Spleen (tissue), 13 donors: ENCODE measurements at regions of chr12 and their contacts with region 1.

Region 1: GRCh38 chr12:104381731-104382480 is 74.8 kb upstream of the CHST11 start:
- DNase-seq: peak; percentile 93
- H3K4me3 ChIP-seq: no peak overlapping the region
- H3K27ac ChIP-seq: no peak overlapping the region
- H3K4me1 ChIP-seq: peaks cover 0 to 11% (median 8%) of the 10 kb centered on the region in 6 donors
- H3K27me3 ChIP-seq: peaks cover 0 to 6% (median 0%) of the 10 kb centered on the region in 7 donors
- CTCF ChIP-seq: peak; percentile 69 to 96 (median 89)
- POLR2A ChIP-seq: no peak

Region 2: GRCh38 chr12:104234926-104235499 is 146.9 kb before region 1 on chr12:
- intact Hi-C with region 1: no loop called
- DNase-seq: no peak
- H3K4me3 ChIP-seq: no peak overlapping the region
- H3K27ac ChIP-seq: no peak overlapping the region
- H3K4me1 ChIP-seq: no peaks in the 10 kb centered on the region
- H3K27me3 ChIP-seq: no peaks in the 10 kb centered on the region
- CTCF ChIP-seq: no peak
- POLR2A ChIP-seq: no peak

Region 3: GRCh38 chr12:104303538-104304151 is 78.3 kb before region 1 on chr12 and contains the start of gene EID3:
- intact Hi-C with region 1: no loop called
- DNase-seq: peak; percentile 98
- H3K4me3 ChIP-seq: peak within 1 kb of the TSS; percentile 38 to 75 (median 50)
- H3K27ac ChIP-seq: peak within 1 kb of the TSS; percentile 58 to 89 (median 80)
- H3K4me1 ChIP-seq: peaks cover 15 to 74% (median 50%) of the 10 kb centered on the region in 6 donors
- H3K27me3 ChIP-seq: no peaks in the 10 kb centered on the region
- CTCF ChIP-seq: no peak
- POLR2A ChIP-seq: peak in 1 of 3 donors; percentile 17
- total RNA-seq, gene EID3: 4.4 to 20.8 (median 7.4) TPM

Region 4: GRCh38 chr12:104877123-104877705 is 495.3 kb after region 1 on chr12:
- intact Hi-C with region 1: loop called (anchors 5 kb)
- DNase-seq: no peak
- H3K4me3 ChIP-seq: no peak overlapping the region
- H3K27ac ChIP-seq: no peak overlapping the region
- H3K4me1 ChIP-seq: no peaks in the 10 kb centered on the region
- H3K27me3 ChIP-seq: no peaks in the 10 kb centered on the region
- CTCF ChIP-seq: peak in 9 of 11 experiments; percentile 32 to 67 (median 60)
- POLR2A ChIP-seq: no peak

Region 5: GRCh38 chr12:105041186-105041585 is 659.3 kb after region 1 on chr12:
- intact Hi-C with region 1: loop called (anchors 5 kb)
- DNase-seq: no peak
- H3K4me3 ChIP-seq: no peak overlapping the region
- H3K27ac ChIP-seq: no peak overlapping the region
- H3K4me1 ChIP-seq: peaks cover 0 to 5% (median 0%) of the 10 kb centered on the region in 6 donors
- H3K27me3 ChIP-seq: no peaks in the 10 kb centered on the region
- CTCF ChIP-seq: no peak
- POLR2A ChIP-seq: no peak